AG04449 (cell line): ENCODE measurements at regions of chr5 and their contacts with region 1.

Region 1: DNA sequence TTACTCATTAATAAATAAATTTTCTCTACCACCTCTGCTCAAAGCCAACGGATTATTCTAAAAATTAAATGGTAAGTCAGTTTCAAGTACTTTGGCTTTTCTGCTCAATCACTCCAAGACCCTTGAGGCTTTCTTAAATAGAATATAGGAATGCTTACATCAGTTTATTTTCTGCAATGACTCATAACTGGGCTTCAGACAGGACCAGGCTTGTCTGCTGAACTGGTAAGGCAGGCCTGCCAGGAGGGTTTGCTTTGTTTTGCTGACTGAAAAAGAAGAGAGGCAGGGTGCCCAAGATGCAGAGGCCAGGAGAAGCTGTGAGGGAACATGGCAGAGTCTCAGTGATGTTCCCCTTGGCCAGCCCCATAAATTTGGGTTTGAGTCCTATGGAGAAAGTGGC is 60.3 kb upstream of the EPB41L4A start:
- DNase-seq: peak; percentile 31
- H3K4me3 ChIP-seq: no peak overlapping the region
- CTCF ChIP-seq: no peak

Region 2: GRCh38 chr5:112492291-112492690 is 12.9 kb after region 1 on chr5:
- CTCF ChIA-PET with region 1: interaction called, 11 read pairs
- POLR2A ChIA-PET with region 1: no interaction called
- DNase-seq: peak; percentile 44
- H3K4me3 ChIP-seq: no peak overlapping the region
- CTCF ChIP-seq: peak; percentile 83